Activated CD4-positive, alpha-beta T cell treated with anti-CD3 and anti-CD28 coated beads for 36 hours (primary cell): ENCODE measurements at regions of chr9 and their contacts with region 1.

Region 1: DNA sequence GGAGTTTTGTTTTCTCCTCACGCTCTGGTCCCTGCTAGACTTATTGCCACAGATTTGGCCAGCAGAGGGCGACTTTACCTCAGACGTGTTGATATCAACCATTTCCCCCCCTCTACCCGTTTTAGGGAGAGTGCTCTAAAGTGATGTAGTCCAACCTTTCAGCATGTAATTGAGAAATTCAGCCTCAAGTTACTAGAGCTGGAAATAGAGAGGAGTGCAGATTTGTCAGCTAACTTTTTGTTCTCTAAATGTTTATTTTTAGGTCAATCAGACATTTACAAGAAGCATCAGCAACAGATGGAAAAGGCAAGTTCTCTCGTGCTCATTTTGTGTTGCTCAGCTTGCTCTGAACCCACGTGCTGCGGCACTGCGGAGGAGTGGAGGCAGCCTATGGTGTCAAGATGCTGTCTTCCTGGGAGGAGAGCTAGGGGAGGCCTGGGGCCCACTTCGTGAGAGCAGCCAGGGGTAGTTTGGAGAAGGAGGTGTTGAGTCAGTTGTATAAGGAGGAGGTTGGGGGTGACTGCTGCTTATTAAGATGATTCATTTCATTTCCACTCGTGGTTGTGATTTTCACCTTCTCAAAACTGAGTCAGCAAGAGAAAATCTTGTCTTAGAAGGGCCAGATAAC is 53.6 kb downstream of the GPR107 start:
- DNase-seq: peak; percentile 92
- ATAC-seq: peak; percentile 89
- H3K4me3 Mint-ChIP-seq: peak overlapping the region; percentile 28
- H3K27ac Mint-ChIP-seq: peak overlapping the region; percentile 85
- H3K4me1 Mint-ChIP-seq: peaks cover 43% of the 10 kb centered on the region
- H3K27me3 Mint-ChIP-seq: no peaks in the 10 kb centered on the region

Region 2: GRCh38 chr9:129737479-129738274 is 369.7 kb before region 1 on chr9:
- CTCF ChIA-PET with region 1: interaction called, 5 read pairs
- POLR2A ChIA-PET with region 1: no interaction called
- intact Hi-C with region 1: loop called in 1 of 2 experiments (anchors 5 kb)
- DNase-seq: peak; percentile 93
- ATAC-seq: peak; percentile 89
- H3K4me3 Mint-ChIP-seq: peak overlapping the region; percentile 55
- H3K27ac Mint-ChIP-seq: no peak overlapping the region
- H3K4me1 Mint-ChIP-seq: peaks cover 6% of the 10 kb centered on the region
- H3K27me3 Mint-ChIP-seq: no peaks in the 10 kb centered on the region

Region 3: DNA sequence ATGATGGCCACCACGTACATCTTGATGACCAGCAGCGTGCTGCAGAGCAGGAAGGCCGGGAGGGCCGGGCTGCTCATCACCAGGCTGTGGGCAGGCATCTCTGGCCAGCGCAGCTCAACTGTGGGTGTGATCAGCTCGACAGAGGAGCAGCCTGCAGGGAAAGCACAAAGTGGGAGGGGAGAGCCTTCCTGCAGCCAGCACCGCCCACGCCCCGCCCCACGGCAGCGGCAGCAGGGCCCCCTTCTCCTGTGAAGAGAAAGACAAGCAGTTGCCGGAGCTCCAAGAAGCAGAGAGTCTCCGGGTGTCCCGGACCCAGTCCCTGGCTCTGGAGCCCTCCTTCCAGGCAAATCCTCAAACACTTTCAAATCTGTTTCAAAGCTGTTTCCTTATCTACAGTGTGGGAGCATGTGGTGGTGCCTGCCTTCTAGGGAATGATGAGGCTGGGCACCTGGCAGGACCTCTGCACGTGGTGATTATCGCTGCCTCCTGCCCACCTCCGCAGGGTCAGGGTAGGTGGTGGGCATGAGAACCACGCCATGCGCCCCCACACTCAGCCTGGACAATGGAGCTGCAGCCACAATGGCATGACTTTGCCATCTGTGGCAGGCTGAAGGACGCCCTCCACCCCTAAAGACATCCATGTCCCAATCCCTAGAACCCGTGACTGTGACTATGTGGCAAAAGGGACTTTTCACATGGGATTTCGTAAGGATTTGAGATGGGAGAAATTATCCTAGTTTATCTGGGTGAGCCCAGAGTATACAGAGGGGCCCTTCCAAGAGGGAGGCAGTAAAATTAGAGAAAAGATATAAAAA is 354.2 kb before region 1 on chr9 and contains the start of gene PTGES:
- CTCF ChIA-PET with region 1: no interaction called
- POLR2A ChIA-PET with region 1: no interaction called
- intact Hi-C with region 1: no loop called
- DNase-seq: peak; percentile 73
- ATAC-seq: peak; percentile 84
- H3K4me3 Mint-ChIP-seq: peak within 1 kb of the TSS; percentile 23
- H3K27ac Mint-ChIP-seq: no peak within 1 kb of the TSS
- H3K4me1 Mint-ChIP-seq: peaks cover 21% of the 10 kb centered on the region
- H3K27me3 Mint-ChIP-seq: peaks cover 2% of the 10 kb centered on the region
- total RNA-seq, gene PTGES: 0.09 to 0.16 TPM

Region 4: DNA sequence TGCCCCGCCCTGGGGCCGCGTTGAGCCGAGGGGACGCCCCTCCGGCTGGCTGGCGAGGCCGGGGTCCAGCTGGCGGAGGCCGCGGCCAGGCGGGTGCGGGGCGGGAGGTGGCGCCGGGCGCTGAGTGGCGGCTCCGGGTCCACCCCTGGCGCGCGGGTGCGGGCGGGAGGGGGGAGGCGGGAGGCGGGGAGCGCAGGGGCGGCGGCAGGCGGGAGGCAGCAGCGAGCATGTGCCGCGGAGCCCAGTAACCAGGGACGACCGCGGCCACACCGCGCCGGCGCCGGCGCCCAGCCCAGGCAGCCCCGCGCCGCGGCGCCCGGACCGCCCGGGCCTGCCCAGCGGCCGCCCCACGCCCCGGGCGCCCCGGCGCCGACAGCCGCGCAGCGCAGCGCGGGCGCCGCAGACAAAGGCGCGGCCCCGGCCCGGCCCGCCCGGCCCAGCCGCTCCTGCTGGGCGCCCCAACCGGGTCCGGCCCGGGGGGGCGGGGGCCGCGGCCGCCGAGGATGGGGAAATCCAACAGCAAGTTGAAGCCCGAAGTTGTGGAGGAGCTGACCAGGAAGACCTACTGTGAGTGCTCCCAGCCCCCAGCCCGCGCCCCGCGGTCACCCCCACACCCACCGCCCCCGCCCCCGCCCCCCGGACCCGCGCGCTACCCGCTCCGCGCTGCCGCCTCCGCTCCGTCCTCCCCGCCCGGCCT is 65.0 kb after region 1 on chr9 and contains the start of gene NCS1:
- CTCF ChIA-PET with region 1: interaction called, 4 read pairs
- POLR2A ChIA-PET with region 1: no interaction called
- intact Hi-C with region 1: loop called (anchors 1 to 5 kb)
- DNase-seq: peak; percentile 74
- ATAC-seq: peak; percentile 70
- H3K4me3 Mint-ChIP-seq: peak within 1 kb of the TSS; percentile 73
- H3K27ac Mint-ChIP-seq: peak within 1 kb of the TSS; percentile 51
- H3K4me1 Mint-ChIP-seq: peaks cover 3% of the 10 kb centered on the region
- H3K27me3 Mint-ChIP-seq: peaks cover 13% of the 10 kb centered on the region
- total RNA-seq, gene NCS1: 24.8 to 25.2 TPM

Region 5: DNA sequence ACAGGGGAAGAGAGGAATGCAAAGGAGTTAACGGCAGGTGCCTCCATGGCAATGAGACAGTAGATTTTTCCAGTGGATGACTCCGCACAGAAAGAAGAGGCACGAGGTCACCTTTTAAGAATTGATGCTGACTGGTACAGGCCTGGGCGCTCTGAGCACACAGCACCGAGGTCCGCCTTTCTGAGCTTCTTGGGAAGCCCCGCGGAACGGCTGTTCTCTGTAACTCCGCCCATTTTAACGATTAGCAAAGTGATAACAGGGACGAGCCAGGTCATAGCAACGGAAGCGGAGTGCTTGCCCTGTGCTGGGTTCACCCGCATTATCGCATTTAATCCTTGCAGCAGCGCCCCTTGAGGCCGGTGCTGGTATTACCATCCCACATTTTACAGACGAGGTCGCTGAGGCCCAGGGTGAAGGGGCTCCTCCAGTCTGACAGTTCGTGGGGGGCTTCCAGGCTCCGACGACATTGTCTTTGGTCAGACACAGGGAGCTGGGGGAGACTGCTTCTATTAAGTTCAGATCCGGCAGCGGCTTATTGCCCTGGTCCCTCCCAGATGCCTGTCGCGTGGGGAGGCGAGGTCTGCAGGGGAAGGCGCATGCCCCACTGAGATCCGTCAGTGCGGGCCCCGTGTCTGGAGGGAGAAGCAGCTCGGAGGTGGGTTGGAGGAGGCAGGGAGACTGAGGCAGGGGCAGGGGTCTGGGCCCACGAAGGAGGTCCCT is 135.8 kb after region 1 on chr9:
- CTCF ChIA-PET with region 1: interaction called, 59 read pairs
- POLR2A ChIA-PET with region 1: no interaction called
- intact Hi-C with region 1: no loop called
- DNase-seq: peak; percentile 88
- ATAC-seq: peak; percentile 45
- H3K4me3 Mint-ChIP-seq: peak overlapping the region; percentile 8
- H3K27ac Mint-ChIP-seq: peak overlapping the region; percentile 26
- H3K4me1 Mint-ChIP-seq: peaks cover 32% of the 10 kb centered on the region
- H3K27me3 Mint-ChIP-seq: no peaks in the 10 kb centered on the region

Region 6: GRCh38 chr9:130417602-130418001 is 310.3 kb after region 1 on chr9:
- CTCF ChIA-PET with region 1: no interaction called
- POLR2A ChIA-PET with region 1: no interaction called
- intact Hi-C with region 1: loop called in 1 of 2 experiments (anchors 5 kb)
- DNase-seq: peak; percentile 33
- ATAC-seq: no peak
- H3K4me3 Mint-ChIP-seq: no peak overlapping the region
- H3K27ac Mint-ChIP-seq: no peak overlapping the region
- H3K4me1 Mint-ChIP-seq: no peaks in the 10 kb centered on the region
- H3K27me3 Mint-ChIP-seq: peaks cover 3% of the 10 kb centered on the region